SK-N-SH (cell line): ENCODE measurements at regions of chr15 and their contacts with region 1.

Region 1: GRCh38 chr15:74127260-74127953 is 3.0 kb upstream of the ISLR2 start:
- DNase-seq: peak; percentile 94
- H3K4me3 ChIP-seq: peak overlapping the region; percentile 42 to 59
- H3K27ac ChIP-seq: peak overlapping the region in 1 of 2 experiments; percentile 65; a peak in 1 of 4 replicates
- H3K4me1 ChIP-seq: peaks cover 0 to 31% of the 10 kb centered on the region in 2 experiments; a peak in 1 of 4 replicates
- H3K27me3 ChIP-seq: peaks cover 32% of the 10 kb centered on the region
- CTCF ChIP-seq: peak; percentile 80
- EP300 ChIP-seq: no peak
- RAD21 ChIP-seq: peak; percentile 97

Region 2: GRCh38 chr15:74053941-74054529 is 73.4 kb before region 1 on chr15:
- CTCF ChIA-PET with region 1: interaction called, 15 read pairs
- POLR2A ChIA-PET with region 1: no interaction called
- DNase-seq: peak; percentile 94
- H3K4me3 ChIP-seq: peak overlapping the region in 1 of 2 experiments; percentile 8; a peak in 1 of 4 replicates
- H3K27ac ChIP-seq: peak overlapping the region in 1 of 2 experiments; percentile 35; a peak in 2 of 4 replicates
- H3K4me1 ChIP-seq: peaks cover 15 to 18% of the 10 kb centered on the region in 2 experiments; a peak in 3 of 4 replicates
- H3K27me3 ChIP-seq: no peaks in the 10 kb centered on the region
- CTCF ChIP-seq: peak; percentile 56
- EP300 ChIP-seq: no peak
- RAD21 ChIP-seq: peak; percentile 80

Region 3: GRCh38 chr15:74172701-74173379 is 45.4 kb after region 1 on chr15:
- CTCF ChIA-PET with region 1: interaction called, 13 read pairs
- POLR2A ChIA-PET with region 1: interaction called, 4 read pairs
- DNase-seq: peak; percentile 61
- H3K4me3 ChIP-seq: no peak overlapping the region
- H3K27ac ChIP-seq: peak overlapping the region in 1 of 2 experiments; percentile 86; a peak in 3 of 4 replicates
- H3K4me1 ChIP-seq: peaks cover 26 to 68% of the 10 kb centered on the region in 2 experiments; a peak in 3 of 4 replicates
- H3K27me3 ChIP-seq: no peaks in the 10 kb centered on the region
- CTCF ChIP-seq: no peak
- EP300 ChIP-seq: no peak
- RAD21 ChIP-seq: no peak

Region 4: DNA sequence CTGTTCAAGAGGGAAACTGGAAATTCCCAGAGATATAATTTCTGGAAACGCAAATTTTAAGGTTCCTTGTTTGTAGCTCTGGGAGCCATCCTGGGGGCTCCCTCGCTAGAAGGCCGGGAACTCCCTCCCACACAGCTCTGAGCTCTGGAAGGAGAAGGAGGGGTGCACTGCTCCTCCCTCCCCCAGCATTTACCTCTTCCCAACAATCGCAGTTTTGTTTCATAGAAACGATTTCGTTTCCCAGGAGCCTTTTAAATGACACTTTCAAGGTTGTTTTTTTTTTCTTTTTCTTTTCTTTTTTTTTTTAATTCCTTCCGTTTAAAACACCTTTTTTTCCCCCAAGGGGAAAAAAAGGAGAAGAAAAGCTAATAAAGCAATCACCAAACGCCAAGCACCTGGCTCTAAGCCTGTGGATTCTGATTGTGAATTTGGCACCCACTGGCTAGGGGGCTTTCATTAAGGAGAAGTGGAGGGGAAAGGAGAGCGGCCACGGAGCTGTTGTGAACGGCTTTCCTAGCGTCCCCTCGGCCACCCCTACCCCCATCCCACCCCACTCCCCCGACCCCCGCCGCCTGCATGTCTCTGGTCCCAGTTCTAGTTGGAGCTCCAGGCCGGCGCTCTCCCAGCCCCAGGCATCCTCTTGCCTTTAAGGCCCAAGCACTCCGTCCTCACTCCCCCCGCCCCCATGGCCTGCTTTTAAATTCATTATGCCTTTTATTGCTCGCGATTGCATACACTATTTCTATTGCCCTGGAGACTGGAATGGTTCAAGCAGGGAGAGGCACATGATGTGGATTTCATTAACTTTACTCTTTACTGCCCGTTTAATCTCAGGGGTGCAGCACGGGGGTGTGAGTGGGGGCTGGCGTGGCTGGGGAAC is 95.1 kb after region 1 on chr15:
- CTCF ChIA-PET with region 1: interaction called, 26 read pairs
- POLR2A ChIA-PET with region 1: interaction called, 4 read pairs
- DNase-seq: peak; percentile 55
- H3K4me3 ChIP-seq: no peak overlapping the region
- H3K27ac ChIP-seq: peak overlapping the region in 1 of 2 experiments; percentile 100; a peak in 2 of 4 replicates
- H3K4me1 ChIP-seq: peaks cover 27 to 71% of the 10 kb centered on the region in 2 experiments
- H3K27me3 ChIP-seq: no peaks in the 10 kb centered on the region
- CTCF ChIP-seq: no peak
- EP300 ChIP-seq: no peak
- RAD21 ChIP-seq: no peak

Region 5: DNA sequence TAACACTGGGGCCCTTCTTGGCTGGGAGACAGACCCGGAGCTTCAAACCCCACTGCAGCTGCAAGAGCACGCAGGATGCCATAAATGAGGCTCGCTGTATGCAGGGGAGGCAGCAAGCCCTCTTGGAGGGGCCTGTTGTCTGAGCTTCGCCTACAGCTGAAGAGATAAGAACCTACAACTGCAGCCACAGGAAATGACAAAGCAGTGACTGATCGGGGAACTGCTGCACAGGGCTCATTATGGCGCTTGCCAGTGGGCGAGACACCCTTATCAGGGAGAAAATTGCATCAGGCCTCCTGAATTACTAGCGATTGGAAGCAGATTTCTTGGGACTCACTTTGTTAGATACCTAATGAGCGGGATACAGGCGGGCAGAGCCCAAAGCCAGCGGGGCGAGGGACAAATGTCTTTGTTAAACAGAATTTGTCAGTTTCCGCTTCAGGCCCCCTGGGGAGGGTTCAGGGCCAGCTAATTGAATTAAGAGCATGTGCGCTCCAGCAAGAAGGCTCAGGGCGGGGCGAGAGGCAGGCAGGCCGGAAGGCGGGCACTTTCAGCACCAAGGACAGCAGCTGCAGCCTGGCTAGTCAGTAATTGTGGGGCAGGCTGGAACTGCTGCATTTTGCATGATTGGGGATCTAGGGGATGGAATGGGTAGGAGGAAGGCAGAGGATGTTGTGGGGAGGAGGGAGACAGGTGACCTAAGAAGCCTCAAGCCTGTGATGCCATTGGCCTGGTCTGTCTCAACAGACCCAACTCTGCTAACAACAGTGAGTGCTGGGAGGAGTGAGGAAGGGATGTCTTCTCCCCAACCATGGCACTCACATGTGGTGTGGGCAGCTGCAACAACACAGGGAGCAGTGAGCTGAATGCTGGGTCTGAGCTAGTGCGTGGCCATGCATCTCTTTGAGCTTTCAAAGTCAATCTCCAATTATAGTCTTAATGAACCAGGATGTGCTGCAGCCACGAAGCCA is 164.0 kb after region 1 on chr15:
- CTCF ChIA-PET with region 1: interaction called, 6 read pairs
- POLR2A ChIA-PET with region 1: interaction called, 17 read pairs
- DNase-seq: peak; percentile 85
- H3K4me3 ChIP-seq: no peak overlapping the region; a peak in 1 of 4 replicates
- H3K27ac ChIP-seq: peak overlapping the region; percentile 40 to 100; a peak in 3 of 4 replicates
- H3K4me1 ChIP-seq: peaks cover 5 to 70% of the 10 kb centered on the region in 2 experiments; a peak in 3 of 4 replicates
- H3K27me3 ChIP-seq: no peaks in the 10 kb centered on the region
- CTCF ChIP-seq: no peak
- EP300 ChIP-seq: peak; percentile 61 to 99
- RAD21 ChIP-seq: peak; percentile 42

Region 6: GRCh38 chr15:74322181-74323076 is 195.0 kb after region 1 on chr15:
- CTCF ChIA-PET with region 1: interaction called, 96 read pairs
- POLR2A ChIA-PET with region 1: interaction called, 3 read pairs
- DNase-seq: peak; percentile 88
- H3K4me3 ChIP-seq: no peak overlapping the region
- H3K27ac ChIP-seq: 0 out of 4 replicates have a peak overlapping the region, but pooled peaks of 1 of the 2 experiments have one; percentile 11
- H3K4me1 ChIP-seq: peaks cover 10 to 39% of the 10 kb centered on the region in 2 experiments; a peak in 3 of 4 replicates
- H3K27me3 ChIP-seq: no peaks in the 10 kb centered on the region
- CTCF ChIP-seq: peak; percentile 88
- EP300 ChIP-seq: no peak
- RAD21 ChIP-seq: peak; percentile 97

Region 7: DNA sequence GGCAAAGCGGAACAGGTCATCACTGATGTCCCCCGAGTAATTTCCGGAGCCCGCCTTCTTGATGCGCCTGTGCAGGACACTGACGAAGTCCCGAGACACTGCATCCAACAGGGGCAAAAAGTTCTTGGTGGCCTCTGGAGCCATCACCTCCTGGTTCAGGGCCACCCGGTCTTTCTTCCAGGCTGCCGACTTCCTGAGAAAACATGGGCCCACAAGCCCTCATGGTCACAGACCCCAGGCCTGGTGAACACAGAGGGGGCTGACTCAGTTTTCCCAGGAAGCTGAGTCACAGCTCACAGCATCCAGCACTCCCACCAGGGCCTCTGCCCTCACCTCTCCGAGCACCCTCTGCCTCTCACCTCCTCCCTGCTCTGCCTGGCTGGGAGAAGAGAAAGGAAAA is 217.6 kb after region 1 on chr15:
- CTCF ChIA-PET with region 1: no interaction called
- POLR2A ChIA-PET with region 1: no interaction called
- DNase-seq: no peak
- H3K4me3 ChIP-seq: no peak overlapping the region
- H3K27ac ChIP-seq: no peak overlapping the region
- H3K4me1 ChIP-seq: peaks cover 0 to 3% of the 10 kb centered on the region in 2 experiments; a peak in 1 of 4 replicates
- H3K27me3 ChIP-seq: no peaks in the 10 kb centered on the region
- CTCF ChIP-seq: no peak
- EP300 ChIP-seq: no peak
- RAD21 ChIP-seq: no peak

Region 8: GRCh38 chr15:74365611-74366440 is 238.4 kb after region 1 on chr15:
- CTCF ChIA-PET with region 1: no interaction called
- POLR2A ChIA-PET with region 1: no interaction called
- DNase-seq: no peak
- H3K4me3 ChIP-seq: no peak overlapping the region
- H3K27ac ChIP-seq: no peak overlapping the region
- H3K4me1 ChIP-seq: no peaks in the 10 kb centered on the region
- H3K27me3 ChIP-seq: peaks cover 7% of the 10 kb centered on the region; the same call in 1 of the 2 replicates
- CTCF ChIP-seq: no peak
- EP300 ChIP-seq: no peak
- RAD21 ChIP-seq: no peak